Dendritic cell treated with granulocyte-macrophage colony-stimulating factor and Interleukin-4, amounts not matched to agents 40 ng/mL and 50 ng/mL, for 4 days (primary cell): ENCODE measurements at regions of chr9 and their contacts with region 1.

Region 1: GRCh38 chr9:81113456-81114124 is 575.8 kb downstream of the TLE1 start:
- H3K4me3 Mint-ChIP-seq: peak overlapping the region; percentile 56
- H3K27ac Mint-ChIP-seq: peak overlapping the region; percentile 86
- H3K4me1 Mint-ChIP-seq: peaks cover 35% of the 10 kb centered on the region
- H3K27me3 Mint-ChIP-seq: peaks cover 3% of the 10 kb centered on the region

Region 2: DNA sequence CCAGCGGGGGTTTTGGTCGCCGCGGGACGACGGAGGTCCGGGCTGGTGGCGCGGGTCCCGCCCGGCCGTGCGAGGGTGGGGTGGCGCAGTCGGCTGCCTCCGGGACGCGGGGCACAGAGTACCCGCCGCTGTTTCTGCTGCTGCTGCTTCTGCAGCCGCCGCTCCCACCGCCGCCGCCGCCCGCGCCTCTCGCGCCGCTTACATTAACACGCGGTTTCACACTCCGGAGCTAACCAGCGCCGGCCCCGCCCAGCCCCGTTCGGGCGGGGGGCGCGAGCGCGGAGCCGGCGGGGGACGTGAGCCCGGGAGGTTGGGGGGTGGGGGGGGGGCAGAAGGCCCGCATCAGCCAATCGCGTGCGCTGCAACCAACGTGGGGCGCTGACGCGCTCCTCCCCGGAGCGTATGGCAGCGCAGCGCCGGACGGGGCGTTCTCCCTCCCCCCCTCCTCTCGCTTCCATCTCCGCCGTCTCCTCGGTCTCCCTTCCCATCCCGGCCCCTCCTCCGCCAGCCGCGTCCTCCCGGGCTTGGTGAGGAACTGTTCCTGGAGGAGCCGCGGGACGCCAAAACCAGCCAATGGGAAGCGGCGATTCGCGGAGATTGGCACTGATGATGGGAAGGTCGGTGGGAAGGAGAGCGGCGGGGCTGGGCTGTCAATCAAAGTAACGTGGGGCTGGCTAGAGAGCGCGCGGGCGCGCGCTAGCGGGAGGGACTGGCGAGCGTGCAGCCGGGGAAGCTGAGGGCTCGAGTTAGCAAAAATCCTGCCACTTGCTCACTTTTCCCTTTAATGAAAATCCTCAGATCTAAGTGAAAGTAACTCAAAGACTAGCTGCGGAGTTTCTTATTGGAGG is 576.0 kb after region 1 on chr9 and contains the start of gene TLE1:
- intact Hi-C with region 1: loop called (anchors 1 kb)
- H3K4me3 Mint-ChIP-seq: peak within 1 kb of the TSS; percentile 99
- H3K27ac Mint-ChIP-seq: peak within 1 kb of the TSS; percentile 74
- H3K4me1 Mint-ChIP-seq: peaks cover 28% of the 10 kb centered on the region
- H3K27me3 Mint-ChIP-seq: peaks cover 58% of the 10 kb centered on the region